AG04449 (cell line): ENCODE measurements at regions of chr3 and their contacts with region 1.

Region 1: DNA sequence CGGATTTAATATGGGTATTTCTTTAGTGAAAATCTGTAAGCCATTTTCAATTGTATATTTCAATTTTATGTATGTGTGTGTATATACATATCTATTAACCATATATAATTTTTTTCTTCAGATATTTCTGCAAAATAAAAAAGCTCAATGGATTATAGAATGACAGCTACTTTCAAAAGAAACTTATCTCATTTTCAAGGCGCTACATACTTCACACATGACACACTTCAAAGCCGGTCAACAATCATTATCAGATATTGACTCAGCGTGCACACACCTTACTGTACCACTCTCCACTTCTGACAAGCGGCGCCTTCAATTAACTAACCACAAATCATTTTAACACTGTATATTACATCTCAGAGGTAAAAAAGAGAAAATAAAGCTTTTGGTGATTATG is 39.6 kb downstream of the ATP13A3 start:
- DNase-seq: no peak
- H3K4me3 ChIP-seq: no peak overlapping the region
- CTCF ChIP-seq: no peak

Region 2: DNA sequence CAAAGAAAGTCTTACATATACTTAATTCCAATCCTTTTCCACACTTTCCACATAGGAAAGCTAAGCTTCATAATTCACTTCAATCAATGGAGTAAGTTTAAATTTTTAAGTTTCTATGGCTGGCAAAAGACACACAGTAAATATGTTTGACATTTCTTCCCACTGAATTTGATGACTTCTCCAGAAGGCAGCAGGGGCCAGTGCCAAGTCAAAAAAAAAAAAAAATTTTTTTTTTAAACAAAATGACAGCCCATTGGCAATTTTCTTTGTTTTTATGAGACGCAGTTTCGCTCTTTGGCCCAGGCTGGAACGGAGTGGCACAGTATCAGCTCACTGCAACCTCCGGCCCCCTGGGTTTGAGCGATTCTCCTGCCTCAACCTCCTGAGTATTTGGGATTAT is 11.0 kb after region 1 on chr3:
- CTCF ChIA-PET with region 1: interaction called, 10 read pairs
- POLR2A ChIA-PET with region 1: no interaction called
- DNase-seq: no peak
- H3K4me3 ChIP-seq: no peak overlapping the region
- CTCF ChIP-seq: no peak

Region 3: DNA sequence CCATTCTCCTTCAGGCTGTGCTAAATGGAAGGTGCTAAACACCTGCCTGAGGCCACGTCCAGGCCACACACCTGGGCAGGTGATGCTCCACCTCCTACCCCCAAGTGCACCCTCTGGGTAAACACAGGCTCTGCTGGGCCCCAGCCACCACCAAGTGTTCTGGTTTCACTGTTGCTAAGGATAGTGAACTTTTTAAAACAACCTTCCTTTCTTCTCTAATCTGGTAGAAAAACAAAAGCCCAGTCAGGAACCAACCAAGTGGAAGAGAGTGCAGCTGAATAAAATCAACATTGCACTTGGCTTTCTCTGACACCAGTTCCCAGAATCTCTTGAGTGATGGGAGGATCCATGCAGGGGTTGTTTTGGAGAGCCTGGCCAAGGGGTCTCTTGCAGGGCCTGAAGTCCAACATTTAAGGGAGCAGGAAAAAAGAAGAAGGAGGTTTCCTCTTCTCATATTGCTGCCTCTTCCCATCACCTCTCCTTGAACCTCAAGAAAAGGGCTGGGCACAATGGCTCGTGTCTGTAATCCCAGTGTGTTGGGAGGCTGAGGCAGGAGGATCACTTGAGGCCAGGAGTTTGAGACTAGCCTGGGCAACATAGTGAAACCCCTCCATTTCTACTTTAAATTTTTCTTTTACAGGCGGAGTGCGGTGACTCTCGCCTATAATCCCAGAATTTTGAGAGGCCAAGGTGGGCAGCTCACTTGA is 65.9 kb after region 1 on chr3:
- CTCF ChIA-PET with region 1: no interaction called
- POLR2A ChIA-PET with region 1: no interaction called
- DNase-seq: no peak
- H3K4me3 ChIP-seq: no peak overlapping the region
- CTCF ChIP-seq: no peak